Activated CD4-positive, alpha-beta T cell treated with anti-CD3 and anti-CD28 coated beads, Interleukin-2, amount 10 ng/mL, durations not matched to agents 24 days and 14 days (primary cell): ENCODE measurements at regions of chrX and their contacts with region 1.

Region 1: DNA sequence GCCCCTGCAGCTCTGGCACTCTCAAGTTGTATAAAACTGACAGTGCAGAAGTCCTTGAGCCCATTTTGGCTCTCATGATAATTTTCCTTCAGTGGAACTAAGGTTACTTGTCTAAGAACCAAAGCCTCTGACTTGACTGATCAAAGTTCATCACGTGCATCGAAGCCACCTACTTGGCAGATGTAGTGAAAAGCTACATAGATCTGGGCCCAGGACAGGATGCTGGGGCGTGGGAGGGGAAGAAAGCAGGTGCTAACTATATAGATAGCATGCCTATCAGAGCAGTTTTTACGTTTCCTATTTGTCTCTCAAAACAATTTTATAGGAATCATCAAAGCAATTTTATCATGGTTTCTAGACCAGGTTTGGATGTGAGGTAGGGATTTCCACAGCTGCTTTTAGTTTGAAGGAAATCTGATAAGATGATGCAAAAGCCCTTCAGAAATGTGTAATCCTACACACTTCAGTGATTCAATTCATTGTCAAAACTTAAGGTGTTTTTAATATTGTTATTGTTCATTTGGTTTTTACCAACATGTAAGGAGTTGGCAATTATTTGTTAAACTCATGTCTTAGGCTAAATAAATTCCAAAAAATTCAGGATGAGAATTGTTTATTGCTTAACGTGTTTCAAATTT is 1.2 kb upstream of the CD40LG start:
- DNase-seq: peak; percentile 79
- H3K4me3 Mint-ChIP-seq: peak overlapping the region; percentile 98
- H3K27ac Mint-ChIP-seq: peak overlapping the region; percentile 98
- H3K4me1 Mint-ChIP-seq: peaks cover 43% of the 10 kb centered on the region
- H3K27me3 Mint-ChIP-seq: no peaks in the 10 kb centered on the region

Region 2: DNA sequence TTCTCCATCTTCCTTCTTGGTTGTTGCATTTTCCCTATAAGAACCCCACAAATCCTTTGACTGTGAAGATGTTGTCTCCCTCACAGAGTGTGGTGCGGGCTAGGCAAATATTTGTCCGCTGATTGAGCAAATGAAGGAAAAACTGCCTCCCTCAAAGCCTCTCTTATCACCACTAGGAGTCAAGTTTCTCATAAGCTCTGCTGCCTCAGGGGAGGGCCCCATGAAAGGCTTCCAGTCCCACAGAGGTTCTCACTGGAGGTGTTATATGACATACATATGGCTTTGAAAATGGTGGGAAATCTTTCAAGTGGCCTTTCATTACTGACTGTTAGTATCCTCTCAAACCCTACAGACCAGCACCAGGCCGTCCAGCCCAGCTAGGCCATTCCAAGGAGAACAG is 105.4 kb before region 1 on chrX:
- intact Hi-C with region 1: no loop called
- DNase-seq: no peak
- H3K4me3 Mint-ChIP-seq: no peak overlapping the region
- H3K27ac Mint-ChIP-seq: no peak overlapping the region
- H3K4me1 Mint-ChIP-seq: peaks cover 19% of the 10 kb centered on the region
- H3K27me3 Mint-ChIP-seq: peaks cover 4% of the 10 kb centered on the region

Region 3: DNA sequence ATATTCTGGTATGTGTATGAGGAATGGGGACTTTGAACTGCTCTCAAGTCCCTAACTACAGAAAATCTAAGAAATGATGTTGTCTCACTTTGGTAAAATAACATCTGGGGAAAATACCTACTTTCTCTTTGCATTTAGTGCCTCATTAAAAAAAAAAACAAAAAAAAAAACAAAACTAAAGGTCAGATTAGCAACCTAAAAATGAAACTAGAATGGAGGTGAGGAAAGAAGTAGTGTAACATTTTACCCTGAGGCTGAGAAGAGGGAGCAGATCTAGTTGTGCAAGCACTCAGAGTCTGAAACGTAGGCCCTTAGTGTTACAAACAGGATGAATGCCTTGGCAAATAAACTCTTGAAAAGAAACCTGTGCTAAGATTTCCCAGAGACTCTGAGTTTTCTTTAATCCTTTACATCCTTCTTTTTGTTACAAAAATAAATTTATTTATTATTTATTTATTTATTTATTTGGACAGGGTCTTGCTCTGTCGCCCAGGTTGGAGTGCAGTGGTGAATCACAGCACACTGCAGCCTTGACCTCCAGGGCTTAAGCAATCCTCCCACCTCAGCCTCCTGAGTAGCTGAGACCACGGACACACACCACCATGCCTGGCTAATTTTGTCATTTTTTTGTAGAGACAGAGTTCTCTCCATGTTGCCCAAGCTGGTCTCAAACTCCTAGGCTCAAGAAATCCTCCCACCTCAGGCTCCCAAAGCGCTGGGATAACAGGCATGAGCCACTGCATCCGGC is 58.5 kb before region 1 on chrX:
- intact Hi-C with region 1: loop called (anchors 1 kb)
- DNase-seq: peak; percentile 63
- H3K4me3 Mint-ChIP-seq: peak overlapping the region; percentile 62
- H3K27ac Mint-ChIP-seq: peak overlapping the region; percentile 87
- H3K4me1 Mint-ChIP-seq: peaks cover 49% of the 10 kb centered on the region
- H3K27me3 Mint-ChIP-seq: no peaks in the 10 kb centered on the region

Region 4: DNA sequence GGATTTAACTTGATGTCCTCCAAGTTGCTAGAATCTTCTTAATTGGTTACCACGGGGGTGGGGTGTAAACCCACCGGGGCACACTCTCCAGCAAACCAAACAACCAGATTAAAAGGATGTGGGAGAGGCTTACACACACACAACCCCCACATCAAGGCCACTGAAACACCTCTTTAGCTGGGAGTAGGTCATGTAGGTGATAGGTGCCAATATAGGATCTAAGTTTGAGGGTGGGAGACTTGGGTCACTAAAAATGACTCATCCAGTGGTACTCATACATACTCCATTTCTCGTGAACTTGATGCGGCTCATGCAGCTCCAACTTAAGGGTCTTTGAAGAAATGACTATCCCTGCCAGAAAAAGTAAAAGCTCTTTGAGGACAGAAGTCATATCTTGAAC is 19.3 kb before region 1 on chrX:
- intact Hi-C with region 1: loop called (anchors 1 kb)
- DNase-seq: peak; percentile 79
- H3K4me3 Mint-ChIP-seq: peak overlapping the region; percentile 57
- H3K27ac Mint-ChIP-seq: peak overlapping the region; percentile 96
- H3K4me1 Mint-ChIP-seq: peaks cover 75% of the 10 kb centered on the region
- H3K27me3 Mint-ChIP-seq: no peaks in the 10 kb centered on the region

Region 5: DNA sequence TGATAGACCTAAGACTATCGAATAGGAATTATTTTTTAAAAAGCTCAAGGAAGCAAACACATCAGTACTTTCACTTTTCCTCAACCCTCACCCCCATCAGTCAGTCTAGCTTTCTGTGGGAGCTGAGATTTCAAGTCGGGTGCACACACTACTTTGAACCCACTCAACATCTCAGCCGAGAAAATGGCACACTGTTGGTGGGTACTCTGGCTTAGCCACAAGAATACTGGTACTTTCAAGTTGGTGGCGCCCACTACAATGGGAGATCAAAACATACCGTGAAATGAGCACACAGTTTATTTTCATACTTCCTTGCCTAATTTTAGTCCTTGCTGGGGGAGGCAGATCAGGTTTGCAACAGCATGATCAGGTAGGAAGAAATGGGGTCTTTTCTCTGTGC is 11.4 kb after region 1 on chrX:
- intact Hi-C with region 1: loop called (anchors 1 kb)
- DNase-seq: peak; percentile 75
- H3K4me3 Mint-ChIP-seq: peak overlapping the region; percentile 98
- H3K27ac Mint-ChIP-seq: peak overlapping the region; percentile 98
- H3K4me1 Mint-ChIP-seq: peaks cover 70% of the 10 kb centered on the region
- H3K27me3 Mint-ChIP-seq: no peaks in the 10 kb centered on the region

Region 6: DNA sequence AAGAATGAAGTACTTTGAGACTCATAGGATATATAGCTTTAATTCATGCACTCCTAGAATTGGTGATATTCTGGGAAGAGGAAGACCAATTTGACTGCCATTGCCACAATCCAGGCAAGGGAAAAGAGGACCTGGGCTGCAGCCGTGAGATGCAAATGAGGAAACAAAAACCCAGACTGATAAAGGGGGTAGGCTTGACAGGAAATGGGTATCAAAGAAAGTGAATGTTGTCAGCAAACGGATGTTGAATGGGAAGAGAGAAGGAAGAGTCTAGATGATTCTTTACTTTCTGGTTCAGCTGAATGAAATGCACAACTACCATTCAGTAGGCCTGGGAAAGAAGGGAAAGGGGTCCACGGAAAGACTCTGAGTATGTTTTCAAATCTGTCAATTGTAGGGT is 151.1 kb after region 1 on chrX:
- intact Hi-C with region 1: no loop called
- DNase-seq: no peak
- H3K4me3 Mint-ChIP-seq: peak overlapping the region; percentile 36
- H3K27ac Mint-ChIP-seq: no peak overlapping the region
- H3K4me1 Mint-ChIP-seq: peaks cover 11% of the 10 kb centered on the region
- H3K27me3 Mint-ChIP-seq: no peaks in the 10 kb centered on the region

Region 7: GRCh38 chrX:136920001-136920400 is 273.3 kb after region 1 on chrX:
- intact Hi-C with region 1: loop called (anchors 5 kb)
- DNase-seq: no peak
- H3K4me3 Mint-ChIP-seq: no peak overlapping the region
- H3K27ac Mint-ChIP-seq: no peak overlapping the region
- H3K4me1 Mint-ChIP-seq: peaks cover 1% of the 10 kb centered on the region
- H3K27me3 Mint-ChIP-seq: no peaks in the 10 kb centered on the region